ENCODE measurements at regions of chr7 and their contacts with region 1.

Region 1: DNA sequence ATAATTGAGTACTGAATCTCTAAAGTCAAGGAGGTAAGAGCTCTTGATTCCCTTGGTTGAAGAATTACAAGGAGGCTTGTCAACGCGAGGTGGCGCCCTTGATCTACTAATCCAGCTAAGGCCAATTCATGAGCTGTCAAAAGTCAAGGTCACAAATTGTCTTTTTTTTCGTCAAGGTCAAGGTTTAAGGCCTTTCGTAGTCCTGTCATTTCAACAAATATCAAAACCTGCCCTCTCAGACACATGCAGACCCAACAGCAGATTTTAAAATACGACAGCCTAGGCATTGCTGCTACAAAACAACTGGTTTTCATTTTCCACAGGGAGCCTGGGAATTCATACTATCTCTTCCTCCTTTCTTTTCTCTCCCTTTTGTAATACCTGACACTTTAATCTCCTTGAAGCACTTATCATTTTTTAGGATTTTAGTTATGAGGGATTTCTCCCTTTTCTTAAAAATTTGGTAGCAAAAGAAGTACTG is 3.6 kb downstream of the HOXA13 start:
- DNase-seq: peak; percentile 88
- ATAC-seq: peak; percentile 50

Region 2: DNA sequence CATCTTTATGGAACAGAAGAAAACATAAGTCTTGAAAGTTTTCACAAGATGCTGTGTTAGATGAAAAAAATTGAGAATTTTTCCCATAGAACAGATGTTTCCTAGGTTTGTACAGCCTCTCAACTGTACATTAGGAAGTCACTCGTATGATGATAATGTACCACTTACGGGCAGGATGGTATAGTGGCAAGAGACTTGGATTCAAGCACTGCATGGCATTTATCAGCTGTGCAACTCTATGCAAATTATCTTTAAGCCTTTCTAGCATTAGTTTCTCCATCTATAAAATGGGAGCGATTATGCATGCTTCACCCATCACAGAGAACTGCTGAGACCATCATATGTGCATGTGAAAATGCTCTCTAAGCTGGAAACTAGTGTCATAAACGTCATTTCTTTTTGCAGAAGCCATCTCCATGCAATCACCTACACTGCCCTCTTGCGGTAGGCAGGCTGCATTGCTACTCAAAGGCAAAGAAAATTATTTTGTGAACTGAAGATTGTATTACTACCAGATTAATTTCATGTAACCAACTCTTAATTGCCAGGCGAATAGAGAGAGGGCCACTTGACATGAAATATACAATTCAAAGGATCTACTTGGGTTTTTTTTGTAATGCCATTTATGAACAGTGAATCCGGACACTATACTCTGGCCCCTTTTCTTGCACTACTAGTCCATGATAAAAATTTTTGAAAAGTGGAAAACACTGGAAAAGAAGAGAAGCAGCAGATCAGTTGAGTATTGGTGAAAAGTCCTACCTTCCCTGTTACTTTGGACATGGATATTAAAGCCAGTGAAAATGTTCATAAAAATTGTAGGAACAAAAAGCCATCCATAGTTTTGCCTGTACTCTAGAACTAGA is 881.9 kb after region 1 on chr7:
- intact Hi-C with region 1: loop called (anchors 5 kb)
- DNase-seq: peak; percentile 39
- ATAC-seq: no peak